Pancreas (tissue), 10 donors: ENCODE measurements at regions of chr11 and their contacts with region 1.

Region 1: DNA sequence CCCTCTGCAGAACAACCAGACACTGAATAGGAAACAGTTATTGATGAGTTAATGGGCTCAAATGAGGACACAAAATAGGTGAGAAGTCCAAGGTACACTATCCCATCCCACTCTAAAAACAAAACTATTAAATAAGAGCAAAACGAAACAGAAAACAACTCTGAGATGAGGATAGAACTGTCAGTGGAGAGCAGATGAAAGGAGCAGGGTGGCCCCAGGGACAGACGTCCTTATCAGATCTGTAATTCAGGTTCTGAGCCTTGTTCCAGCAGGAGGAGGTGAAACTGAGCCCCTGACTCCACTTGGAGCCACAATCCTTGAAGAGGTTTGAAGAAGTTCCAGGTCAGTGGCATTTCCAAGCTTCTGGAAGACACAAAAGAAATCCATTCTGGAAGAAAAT is 8.5 kb upstream of the SNX19 start:
- DNase-seq: no peak
- ATAC-seq: no peak
- H3K4me3 ChIP-seq: no peak overlapping the region
- H3K27ac ChIP-seq: no peak overlapping the region
- H3K4me1 ChIP-seq: no peaks in the 10 kb centered on the region
- H3K27me3 ChIP-seq: no peaks in the 10 kb centered on the region
- CTCF ChIP-seq: no peak

Region 2: DNA sequence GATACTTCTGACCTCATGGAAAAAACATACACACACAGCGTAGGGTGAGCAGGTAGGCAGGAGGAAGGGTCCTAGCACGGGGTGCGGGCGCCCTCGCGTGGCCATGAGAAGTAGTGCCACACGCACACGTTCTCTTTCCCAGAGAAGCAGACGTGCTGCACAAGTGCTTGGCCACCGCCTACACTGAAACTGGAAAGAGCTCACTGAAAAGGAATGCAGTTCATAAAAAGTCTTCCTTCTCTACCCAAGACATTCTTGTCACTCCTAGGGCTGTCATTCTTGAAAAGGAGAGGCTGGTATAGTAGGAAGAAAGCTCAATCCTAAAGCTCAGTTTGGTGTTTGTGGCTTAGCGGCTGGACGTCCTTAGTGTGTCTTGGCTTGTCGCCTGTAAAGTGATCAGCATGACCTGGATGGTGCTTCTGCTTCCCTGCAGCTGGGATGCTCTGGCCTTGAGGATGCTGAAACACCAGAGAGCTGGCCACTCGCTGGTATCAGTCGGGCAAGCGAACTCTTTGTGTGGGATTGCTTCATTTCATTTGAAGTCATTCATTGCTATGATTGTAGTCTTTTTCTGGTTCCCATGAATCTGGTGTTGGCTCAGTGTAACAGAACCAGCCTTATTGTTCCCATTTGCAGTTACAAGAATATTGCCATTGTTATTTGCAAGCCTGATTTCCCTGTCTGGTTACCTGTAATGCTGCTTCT is 749.4 kb after region 1 on chr11:
- intact Hi-C with region 1: loop called in 2 of 3 experiments (anchors 10 kb)
- DNase-seq: peak; percentile 32 to 89 (median 74)
- ATAC-seq: peak; percentile 91 to 97 (median 96)
- H3K4me3 ChIP-seq: no peak overlapping the region
- H3K27ac ChIP-seq: no peak overlapping the region
- H3K4me1 ChIP-seq: no peaks in the 10 kb centered on the region
- H3K27me3 ChIP-seq: no peaks in the 10 kb centered on the region
- CTCF ChIP-seq: peak; percentile 82 to 94 (median 88)